Calu3 (cell line): ENCODE measurements at regions of chr1 and their contacts with region 1.

Region 1: GRCh38 chr1:154198756-154199562 is 7.1 kb upstream of the TPM3 start:
- DNase-seq: peak; percentile 53
- H3K4me3 Mint-ChIP-seq: no peak overlapping the region
- H3K27ac Mint-ChIP-seq: no peak overlapping the region
- H3K4me1 Mint-ChIP-seq: no peaks in the 10 kb centered on the region
- H3K27me3 Mint-ChIP-seq: peaks cover 20% of the 10 kb centered on the region
- CTCF ChIP-seq: peak; percentile 57

Region 2: GRCh38 chr1:154272217-154272998 is 73.4 kb after region 1 on chr1 and contains the start of gene HAX1:
- CTCF ChIA-PET with region 1: interaction called, 5 read pairs
- intact Hi-C with region 1: loop called (anchors 1 kb)
- DNase-seq: peak; percentile 91
- H3K4me3 Mint-ChIP-seq: peak within 1 kb of the TSS; percentile 98
- H3K27ac Mint-ChIP-seq: peak within 1 kb of the TSS; percentile 98
- H3K4me1 Mint-ChIP-seq: peaks cover 9% of the 10 kb centered on the region
- H3K27me3 Mint-ChIP-seq: no peaks in the 10 kb centered on the region
- CTCF ChIP-seq: peak; percentile 83
- total RNA-seq, gene HAX1: 112 and 129 TPM in 2 replicates

Region 3: DNA sequence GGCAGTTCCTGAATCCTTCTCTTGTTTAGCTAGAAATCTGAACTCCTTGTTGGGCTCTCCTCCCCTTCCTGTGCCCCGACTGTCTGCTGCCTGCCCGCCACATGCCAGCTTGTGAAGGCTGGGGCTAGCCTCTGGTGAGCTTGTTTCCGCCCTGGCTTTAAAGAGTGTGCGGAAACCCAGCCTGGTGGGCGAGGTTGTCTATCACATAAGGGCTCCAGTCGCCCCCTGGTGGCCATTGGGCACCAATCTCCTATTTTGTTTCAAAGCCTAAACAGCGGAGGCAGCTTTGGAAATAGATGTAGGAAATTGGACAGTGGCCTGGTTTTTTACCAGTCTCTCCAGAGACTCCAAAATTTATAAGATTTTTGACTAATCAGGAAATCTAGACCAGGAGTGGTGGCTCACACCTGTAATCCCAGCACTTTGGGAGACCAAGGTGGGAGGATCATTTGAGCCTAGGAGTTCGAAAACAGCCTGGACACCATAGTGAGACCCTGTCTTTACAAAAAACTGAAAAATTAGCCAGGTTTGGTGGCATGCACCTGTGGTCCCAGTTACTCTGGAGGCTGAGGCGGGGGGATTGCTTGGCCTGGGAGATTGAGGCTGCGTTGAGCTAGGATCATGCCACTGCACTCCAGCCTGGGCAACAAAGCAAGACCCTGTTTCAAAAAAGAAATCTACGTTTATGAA is 136.2 kb after region 1 on chr1:
- CTCF ChIA-PET with region 1: interaction called, 23 read pairs
- intact Hi-C with region 1: loop called (anchors 10 kb)
- DNase-seq: peak; percentile 88
- H3K4me3 Mint-ChIP-seq: no peak overlapping the region
- H3K27ac Mint-ChIP-seq: no peak overlapping the region
- H3K4me1 Mint-ChIP-seq: peaks cover 18% of the 10 kb centered on the region
- H3K27me3 Mint-ChIP-seq: peaks cover 78% of the 10 kb centered on the region
- CTCF ChIP-seq: peak; percentile 79

Region 4: GRCh38 chr1:154546264-154547063 is 347.5 kb after region 1 on chr1:
- CTCF ChIA-PET with region 1: no interaction called
- intact Hi-C with region 1: loop called (anchors 10 kb)
- DNase-seq: peak; percentile 82
- H3K4me3 Mint-ChIP-seq: no peak overlapping the region
- H3K27ac Mint-ChIP-seq: no peak overlapping the region
- H3K4me1 Mint-ChIP-seq: peaks cover 14% of the 10 kb centered on the region
- H3K27me3 Mint-ChIP-seq: peaks cover 44% of the 10 kb centered on the region
- CTCF ChIP-seq: peak; percentile 76